AG04450 (cell line): ENCODE measurements at regions of chr1 and their contacts with region 1.

Region 1: DNA sequence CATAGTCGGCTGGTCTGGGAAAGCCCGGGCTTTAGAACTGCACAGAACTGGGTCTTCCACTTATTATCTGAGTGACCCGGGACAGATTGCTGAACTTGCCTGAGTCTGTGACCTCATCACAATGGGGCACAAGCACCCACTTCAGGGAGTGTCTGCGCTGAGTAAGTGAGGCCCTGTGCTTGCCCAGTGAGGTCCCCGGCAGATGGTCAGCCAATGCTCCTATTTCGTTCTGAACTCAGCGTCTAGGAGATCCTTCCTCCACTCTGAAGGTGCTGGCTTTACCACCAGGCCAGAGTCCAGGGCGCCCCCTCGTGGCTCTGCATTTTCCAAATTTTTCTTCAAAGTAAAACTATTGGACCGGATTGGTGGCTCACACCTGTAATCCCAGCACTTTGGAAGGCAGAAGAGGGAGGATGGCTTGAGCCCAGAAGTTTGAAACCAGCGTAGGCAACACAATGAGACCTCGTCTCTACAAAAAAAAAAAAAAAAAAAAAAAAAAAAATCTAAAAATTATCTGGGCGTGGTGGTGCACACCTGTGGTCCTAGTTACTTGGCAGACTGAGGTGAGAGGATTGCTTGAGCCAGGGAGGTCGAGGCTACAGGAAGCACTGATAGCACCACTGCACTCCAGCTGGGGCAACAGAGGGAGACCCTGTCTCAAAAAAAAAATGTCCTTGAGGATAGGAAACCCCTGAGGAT is 61.7 kb downstream of the FCRL5 start:
- DNase-seq: no peak
- H3K4me3 ChIP-seq: no peak overlapping the region
- H3K27ac ChIP-seq: no peak overlapping the region
- H3K27me3 ChIP-seq: no peaks in the 10 kb centered on the region
- CTCF ChIP-seq: peak; percentile 64

Region 2: GRCh38 chr1:157163273-157164127 is 327.1 kb before region 1 on chr1:
- CTCF ChIA-PET with region 1: interaction called, 12 read pairs
- POLR2A ChIA-PET with region 1: no interaction called
- DNase-seq: no peak
- H3K4me3 ChIP-seq: no peak overlapping the region
- H3K27ac ChIP-seq: no peak overlapping the region
- H3K27me3 ChIP-seq: peaks cover 27% of the 10 kb centered on the region
- CTCF ChIP-seq: peak; percentile 96